CD8-positive, alpha-beta T cell (primary cell): ENCODE measurements at regions of chr22 and their contacts with region 1.

Region 1: DNA sequence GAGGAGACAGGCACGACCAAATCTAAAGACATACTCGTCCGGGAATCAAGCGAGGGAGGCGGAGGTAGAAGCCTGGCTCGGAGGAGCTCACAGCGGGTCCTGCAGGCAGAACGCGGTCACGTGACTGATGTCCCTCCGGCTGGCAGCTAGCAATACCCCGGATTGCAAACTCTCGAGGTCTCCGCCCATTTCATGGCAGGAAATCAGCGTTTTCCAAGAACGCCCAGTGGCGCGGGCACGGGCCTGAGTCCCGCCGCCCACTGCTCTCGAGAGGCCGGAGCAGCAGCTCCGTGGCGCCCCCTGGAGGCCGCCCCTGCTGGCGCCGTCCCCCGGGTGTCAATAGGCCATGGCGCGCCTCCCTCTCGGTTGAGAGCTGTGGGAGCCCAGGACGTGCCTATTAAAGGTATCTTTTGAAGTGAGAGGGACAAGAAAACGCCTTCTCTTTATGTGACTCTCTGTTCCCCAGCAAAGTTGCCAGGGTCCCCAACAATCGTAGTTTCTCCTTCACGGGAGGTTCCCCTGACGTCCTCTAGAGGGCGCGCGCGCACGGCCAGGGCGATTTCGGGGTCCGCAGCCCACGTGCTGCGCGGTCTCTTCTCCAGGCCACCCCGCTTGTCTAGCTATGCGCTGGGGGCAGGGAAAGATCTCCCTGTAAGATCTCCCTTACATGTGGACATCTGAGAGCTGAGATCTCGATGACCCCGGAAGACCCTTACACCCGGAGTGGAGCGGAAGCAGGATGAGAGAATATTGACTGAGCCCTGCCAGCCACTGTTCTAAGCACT is 37.3 kb upstream of the RBFOX2 start:
- DNase-seq: peak; percentile 34 to 80 (median 64)
- ATAC-seq: peak; percentile 81
- H3K4me3 ChIP-seq: peak overlapping the region; percentile 58 to 62
- H3K4me3 Mint-ChIP-seq: peak overlapping the region; percentile 81
- H3K27ac ChIP-seq: no peak overlapping the region
- H3K27ac Mint-ChIP-seq: no peak overlapping the region
- H3K4me1 ChIP-seq: peaks cover 9% of the 10 kb centered on the region
- H3K4me1 Mint-ChIP-seq: peaks cover 9% of the 10 kb centered on the region
- H3K27me3 ChIP-seq: no peaks in the 10 kb centered on the region
- H3K27me3 Mint-ChIP-seq: no peaks in the 10 kb centered on the region
- CTCF ChIP-seq: peak; percentile 99

Region 2: DNA sequence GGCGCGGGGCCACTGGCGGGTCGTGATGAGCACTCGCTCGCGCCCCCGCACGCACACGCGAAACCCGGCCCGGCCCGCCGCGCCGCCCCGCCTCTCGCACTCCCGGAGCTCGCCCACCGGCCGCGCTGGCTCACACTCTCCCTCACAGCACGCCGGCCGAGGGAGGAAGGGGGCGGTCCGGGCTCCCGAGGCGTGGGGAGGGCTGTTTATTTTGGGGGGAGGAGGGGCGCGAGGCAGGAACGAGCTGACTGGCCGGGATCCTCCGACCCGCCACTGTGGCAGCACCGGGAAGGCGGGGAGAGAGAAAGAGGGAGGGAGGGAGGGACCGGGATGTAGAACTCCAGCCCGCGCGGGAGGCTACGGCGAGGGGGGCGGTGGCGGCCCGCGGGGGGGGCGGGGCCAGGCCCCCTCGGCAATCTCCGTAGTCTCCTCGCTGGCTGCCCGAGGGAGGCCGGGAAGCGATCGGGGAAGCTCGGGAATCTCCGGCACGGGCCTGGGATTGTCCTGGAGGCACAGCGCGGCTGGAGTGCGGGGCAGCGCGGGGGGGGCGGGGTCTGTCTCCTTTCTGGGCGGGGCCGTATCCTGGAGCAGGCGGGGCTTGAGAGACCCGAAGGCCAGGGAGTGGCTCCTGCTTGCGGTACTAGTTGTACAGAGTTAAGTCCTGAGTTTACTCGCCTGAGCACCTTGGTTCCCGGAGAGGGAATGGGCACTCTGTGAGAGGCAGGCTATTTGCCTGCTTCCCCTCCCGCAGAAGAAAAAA is 37.1 kb before region 1 on chr22 and contains the start of gene RBFOX2:
- CTCF ChIA-PET with region 1: interaction called, 16 read pairs
- POLR2A ChIA-PET with region 1: no interaction called
- intact Hi-C with region 1: no loop called
- DNase-seq: peak; percentile 13 to 76 (median 57)
- ATAC-seq: peak; percentile 73
- H3K4me3 ChIP-seq: peak within 1 kb of the TSS; percentile 50 to 56
- H3K4me3 Mint-ChIP-seq: peak within 1 kb of the TSS; percentile 91
- H3K27ac ChIP-seq: no peak within 1 kb of the TSS
- H3K27ac Mint-ChIP-seq: peak within 1 kb of the TSS; percentile 75
- H3K4me1 ChIP-seq: peaks cover 13% of the 10 kb centered on the region
- H3K4me1 Mint-ChIP-seq: peaks cover 22% of the 10 kb centered on the region
- H3K27me3 ChIP-seq: peaks cover 0 to 7% of the 10 kb centered on the region in 2 experiments
- H3K27me3 Mint-ChIP-seq: peaks cover 8% of the 10 kb centered on the region
- CTCF ChIP-seq: no peak
- total RNA-seq, gene RBFOX2: 0.79 to 0.94 TPM

Region 3: DNA sequence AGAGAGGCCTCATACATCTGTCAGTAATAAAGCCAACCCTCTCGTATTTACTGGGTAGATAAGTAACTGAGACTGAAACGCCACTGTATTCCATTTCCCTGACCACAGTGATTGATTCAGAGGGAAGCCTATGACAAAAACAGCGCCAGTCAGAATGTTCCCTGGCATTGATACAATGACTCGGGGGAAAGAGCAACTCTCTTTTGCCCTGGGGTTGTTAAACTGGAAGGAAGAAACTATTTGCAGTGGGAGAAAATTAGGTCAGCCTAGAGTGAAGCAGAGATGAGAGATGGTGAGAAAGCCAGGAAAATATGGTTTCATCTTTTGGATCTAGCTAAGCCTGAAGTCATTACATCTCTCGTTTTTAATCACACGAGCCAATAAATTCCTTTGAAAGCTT is 11.3 kb after region 1 on chr22:
- CTCF ChIA-PET with region 1: interaction called, 26 read pairs
- POLR2A ChIA-PET with region 1: no interaction called
- intact Hi-C with region 1: no loop called
- DNase-seq: no peak
- ATAC-seq: no peak
- H3K4me3 ChIP-seq: no peak overlapping the region
- H3K4me3 Mint-ChIP-seq: no peak overlapping the region
- H3K27ac ChIP-seq: no peak overlapping the region
- H3K27ac Mint-ChIP-seq: no peak overlapping the region
- H3K4me1 ChIP-seq: no peaks in the 10 kb centered on the region
- H3K4me1 Mint-ChIP-seq: no peaks in the 10 kb centered on the region
- H3K27me3 ChIP-seq: no peaks in the 10 kb centered on the region
- H3K27me3 Mint-ChIP-seq: no peaks in the 10 kb centered on the region
- CTCF ChIP-seq: no peak

Region 4: DNA sequence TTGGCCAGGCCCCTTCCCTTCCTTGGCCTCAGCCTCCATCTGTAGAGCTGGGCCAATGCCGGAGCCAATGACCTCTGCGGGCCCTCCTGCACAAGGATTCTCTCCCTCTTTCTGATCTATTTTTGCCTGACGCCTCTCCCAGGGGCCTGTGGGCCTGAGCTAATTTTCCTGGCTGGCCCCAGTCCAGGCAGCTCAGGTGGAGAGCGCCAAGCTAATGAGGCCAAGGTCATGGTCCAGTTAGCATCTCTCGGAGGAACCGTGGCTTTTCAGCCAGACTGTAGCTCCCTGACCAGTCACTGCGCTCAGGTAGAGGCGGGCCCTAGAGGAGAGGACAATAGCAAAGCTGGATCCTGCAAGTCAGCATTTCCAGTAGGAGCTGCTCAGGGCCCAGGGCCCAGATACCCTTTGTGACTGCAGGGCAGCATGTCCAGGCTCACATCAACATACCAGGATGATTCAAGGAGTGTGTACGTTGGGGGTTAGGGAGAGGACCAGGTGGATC is 51.1 kb after region 1 on chr22:
- CTCF ChIA-PET with region 1: interaction called, 20 read pairs
- POLR2A ChIA-PET with region 1: no interaction called
- intact Hi-C with region 1: no loop called
- DNase-seq: no peak
- ATAC-seq: no peak
- H3K4me3 ChIP-seq: no peak overlapping the region
- H3K4me3 Mint-ChIP-seq: no peak overlapping the region
- H3K27ac ChIP-seq: no peak overlapping the region
- H3K27ac Mint-ChIP-seq: no peak overlapping the region
- H3K4me1 ChIP-seq: no peaks in the 10 kb centered on the region
- H3K4me1 Mint-ChIP-seq: no peaks in the 10 kb centered on the region
- H3K27me3 ChIP-seq: no peaks in the 10 kb centered on the region
- H3K27me3 Mint-ChIP-seq: no peaks in the 10 kb centered on the region
- CTCF ChIP-seq: no peak

Region 5: GRCh38 chr22:36221799-36222751 is 156.1 kb after region 1 on chr22:
- CTCF ChIA-PET with region 1: interaction called, 3 read pairs
- POLR2A ChIA-PET with region 1: no interaction called
- intact Hi-C with region 1: loop called in 1 of 2 experiments (anchors 5 kb)
- DNase-seq: peak in 7 of 9 experiments; percentile 42 to 70 (median 61)
- ATAC-seq: peak; percentile 85
- H3K4me3 ChIP-seq: no peak overlapping the region
- H3K4me3 Mint-ChIP-seq: peak overlapping the region; percentile 60
- H3K27ac ChIP-seq: no peak overlapping the region
- H3K27ac Mint-ChIP-seq: no peak overlapping the region
- H3K4me1 ChIP-seq: peaks cover 4% of the 10 kb centered on the region
- H3K4me1 Mint-ChIP-seq: peaks cover 7% of the 10 kb centered on the region
- H3K27me3 ChIP-seq: no peaks in the 10 kb centered on the region
- H3K27me3 Mint-ChIP-seq: peaks cover 5% of the 10 kb centered on the region
- CTCF ChIP-seq: peak; percentile 66

Region 6: DNA sequence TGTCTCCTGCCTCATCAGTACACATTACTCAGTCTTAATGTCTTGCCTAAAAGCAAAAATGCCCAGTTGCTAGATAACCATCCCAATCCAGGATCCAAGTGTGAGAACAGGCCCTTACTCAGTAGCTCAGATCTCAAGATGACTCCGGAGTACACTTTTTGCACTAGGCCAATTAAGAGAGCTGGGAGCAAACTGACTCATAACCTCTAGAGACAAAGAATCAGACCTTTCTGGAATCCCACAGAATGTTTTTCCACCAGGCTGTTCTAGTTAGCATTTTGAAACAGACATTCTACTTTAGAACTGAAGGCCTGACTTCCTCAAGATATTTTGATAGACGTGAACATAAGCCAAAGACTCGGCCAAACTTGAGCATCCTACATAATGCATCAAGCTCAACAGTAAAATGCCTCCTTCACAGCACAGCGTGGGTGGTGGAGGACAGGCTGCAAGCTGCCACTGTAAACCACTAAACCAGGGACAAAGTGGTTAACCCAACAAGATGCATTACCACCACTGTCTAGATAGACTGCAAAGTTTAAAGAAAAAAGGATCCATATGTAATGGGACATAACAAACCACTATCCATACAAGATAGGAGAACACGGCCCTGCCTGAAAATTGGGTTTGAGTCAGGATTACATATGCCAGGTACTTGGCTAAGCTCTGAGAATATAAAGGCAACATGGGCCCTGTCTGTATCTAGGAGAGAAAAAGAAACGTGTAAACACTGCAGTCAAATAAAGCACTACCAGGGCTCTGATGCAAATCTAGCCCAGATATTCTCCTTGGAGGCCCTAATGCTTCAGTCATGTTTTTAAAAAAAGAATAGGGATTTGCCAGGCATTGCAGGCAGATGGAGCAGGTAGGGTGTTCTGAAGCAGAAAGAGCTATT is 273.5 kb after region 1 on chr22:
- CTCF ChIA-PET with region 1: no interaction called
- POLR2A ChIA-PET with region 1: no interaction called
- intact Hi-C with region 1: no loop called
- DNase-seq: peak in 2 of 9 experiments; percentile 44 to 50
- ATAC-seq: peak; percentile 12
- H3K4me3 ChIP-seq: no peak overlapping the region
- H3K4me3 Mint-ChIP-seq: peak overlapping the region; percentile 64
- H3K27ac ChIP-seq: peak overlapping the region in 1 of 2 experiments; percentile 55
- H3K27ac Mint-ChIP-seq: peak overlapping the region; percentile 92
- H3K4me1 ChIP-seq: peaks cover 98% of the 10 kb centered on the region
- H3K4me1 Mint-ChIP-seq: peaks cover 92% of the 10 kb centered on the region
- H3K27me3 ChIP-seq: no peaks in the 10 kb centered on the region
- H3K27me3 Mint-ChIP-seq: no peaks in the 10 kb centered on the region
- CTCF ChIP-seq: no peak